ENCODE measurements at regions of chr12 and their contacts with region 1.

Region 1: GRCh38 chr12:89529738-89530137 is 3.9 kb upstream of the POC1B start:
- DNase-seq: no peak
- ATAC-seq: no peak; the same call in 1 of the 2 replicates
- H3K4me3 ChIP-seq: no peak overlapping the region
- H3K27ac ChIP-seq: no peak overlapping the region
- H3K4me1 ChIP-seq: peaks cover 0 to 8% of the 10 kb centered on the region in 2 experiments; a peak in 2 of 4 replicates
- H3K27me3 ChIP-seq: no peaks in the 10 kb centered on the region
- CTCF ChIP-seq: peak; percentile 67 to 79 (median 70)
- POLR2A ChIP-seq: no peak
- RAD21 ChIP-seq: peak; percentile 91

Region 2: DNA sequence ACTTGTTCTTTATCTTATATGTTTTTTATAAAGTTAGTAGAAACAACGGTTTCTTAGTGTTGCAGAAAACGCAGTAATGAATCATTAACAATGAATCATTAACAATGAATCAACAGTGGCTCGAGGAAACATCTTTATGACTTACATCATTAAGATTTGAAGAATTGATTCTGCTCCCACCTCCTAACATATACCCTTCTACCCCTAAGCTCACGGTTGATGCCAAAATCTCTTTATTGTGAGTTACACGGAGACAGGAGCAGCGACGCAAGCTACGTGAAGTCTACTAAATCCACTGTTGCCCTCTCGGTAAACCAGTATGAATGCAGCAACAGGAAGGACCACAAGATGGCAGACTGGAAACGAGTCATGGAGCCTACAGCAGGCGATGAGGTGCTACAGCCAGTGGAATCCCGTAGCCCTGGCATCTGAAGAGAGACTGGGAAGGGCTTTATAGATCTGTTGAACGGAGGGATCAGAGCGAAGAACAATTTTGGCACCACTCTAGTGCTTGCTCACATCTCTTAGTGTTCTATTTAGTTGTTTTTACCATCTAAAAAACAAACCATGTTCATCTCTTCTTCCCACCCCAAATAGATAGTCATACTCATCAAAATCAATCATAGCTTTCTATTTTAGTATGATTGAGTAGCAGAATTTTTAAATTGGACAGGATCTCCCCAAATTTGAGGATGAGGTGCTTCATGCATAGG is 510.2 kb before region 1 on chr12:
- CTCF ChIA-PET with region 1: interaction called, 10 read pairs
- POLR2A ChIA-PET with region 1: interaction called, 3 read pairs
- RAD21 ChIA-PET with region 1: interaction called in 1 of 2 experiments, 4 read pairs
- intact Hi-C with region 1: loop called (anchors 1 kb)
- DNase-seq: peak; percentile 83
- ATAC-seq: peak; percentile 90
- H3K4me3 ChIP-seq: peak overlapping the region; percentile 15 to 40
- H3K27ac ChIP-seq: no peak overlapping the region
- H3K4me1 ChIP-seq: peaks cover 2 to 30% of the 10 kb centered on the region in 2 experiments; a peak in 3 of 4 replicates
- H3K27me3 ChIP-seq: no peaks in the 10 kb centered on the region
- CTCF ChIP-seq: peak; percentile 72 to 88 (median 82)
- POLR2A ChIP-seq: no peak
- RAD21 ChIP-seq: peak; percentile 95

Region 3: GRCh38 chr12:89470741-89471509 is 58.8 kb before region 1 on chr12:
- CTCF ChIA-PET with region 1: interaction called, 6 read pairs
- POLR2A ChIA-PET with region 1: no interaction called
- RAD21 ChIA-PET with region 1: no interaction called
- intact Hi-C with region 1: loop called (anchors 1 kb)
- DNase-seq: peak; percentile 42
- ATAC-seq: peak; percentile 83
- H3K4me3 ChIP-seq: no peak overlapping the region
- H3K27ac ChIP-seq: no peak overlapping the region
- H3K4me1 ChIP-seq: no peaks in the 10 kb centered on the region
- H3K27me3 ChIP-seq: no peaks in the 10 kb centered on the region
- CTCF ChIP-seq: peak; percentile 56 to 72 (median 66)
- POLR2A ChIP-seq: no peak
- RAD21 ChIP-seq: peak; percentile 71